Right cardiac atrium (tissue), 5 donors: ENCODE measurements at regions of chr4 and their contacts with region 1.

Region 1: DNA sequence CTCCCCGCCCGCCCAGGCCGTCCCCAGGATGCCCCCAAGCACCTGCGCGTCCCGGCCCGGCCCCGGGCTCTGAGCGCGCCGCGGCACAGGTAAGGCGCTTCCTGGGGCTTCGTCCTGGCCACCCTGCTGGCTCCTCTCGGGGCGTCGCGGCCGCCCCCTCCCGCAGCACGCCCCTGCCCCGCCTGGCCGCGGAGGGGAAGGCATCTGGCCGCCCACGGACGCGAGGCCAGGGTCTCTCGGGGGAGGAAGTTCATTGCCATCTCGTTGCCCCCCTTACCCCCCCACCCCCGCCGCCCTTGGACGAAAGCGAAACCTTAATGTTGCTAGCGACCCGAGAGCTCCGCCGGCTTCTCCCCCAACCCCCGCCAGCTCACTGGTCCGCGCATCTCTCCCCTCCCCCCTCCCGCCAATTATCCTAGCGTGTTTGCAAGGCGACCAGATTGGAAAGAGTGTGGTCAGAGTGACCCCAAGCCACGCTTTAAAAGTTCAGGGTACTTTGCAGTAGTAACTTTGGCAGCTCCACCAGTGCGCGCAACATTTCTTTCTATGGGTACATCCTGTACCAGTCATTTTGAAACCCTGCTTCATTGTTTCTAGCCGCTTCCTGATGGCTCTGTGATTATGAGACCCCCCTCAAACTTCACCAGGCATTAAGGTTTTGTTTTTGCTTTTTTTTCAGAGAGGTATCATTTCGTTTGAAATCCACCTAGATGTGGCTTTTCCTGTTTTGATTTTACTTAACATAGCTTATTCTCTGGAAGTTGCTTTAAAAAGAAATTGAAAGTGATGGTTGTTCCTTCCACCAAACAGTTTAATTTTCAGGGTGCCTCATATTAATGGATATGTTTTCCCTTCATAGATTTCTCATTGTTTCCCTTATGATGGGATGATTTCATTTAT is 626 bp downstream of the TBC1D1 start:
- DNase-seq: peak; percentile 37 to 70 (median 61)
- ATAC-seq: peak; percentile 34 to 56
- H3K4me3 ChIP-seq: peak overlapping the region; percentile 92
- H3K27ac ChIP-seq: peak overlapping the region; percentile 67
- H3K4me1 ChIP-seq: peaks cover 8% of the 10 kb centered on the region
- H3K27me3 ChIP-seq: no peaks in the 10 kb centered on the region

Region 2: GRCh38 chr4:37788819-37789218 is 102.7 kb before region 1 on chr4:
- intact Hi-C with region 1: no loop called
- DNase-seq: no peak
- ATAC-seq: no peak
- H3K4me3 ChIP-seq: no peak overlapping the region
- H3K27ac ChIP-seq: no peak overlapping the region
- H3K4me1 ChIP-seq: no peaks in the 10 kb centered on the region
- H3K27me3 ChIP-seq: no peaks in the 10 kb centered on the region

Region 3: DNA sequence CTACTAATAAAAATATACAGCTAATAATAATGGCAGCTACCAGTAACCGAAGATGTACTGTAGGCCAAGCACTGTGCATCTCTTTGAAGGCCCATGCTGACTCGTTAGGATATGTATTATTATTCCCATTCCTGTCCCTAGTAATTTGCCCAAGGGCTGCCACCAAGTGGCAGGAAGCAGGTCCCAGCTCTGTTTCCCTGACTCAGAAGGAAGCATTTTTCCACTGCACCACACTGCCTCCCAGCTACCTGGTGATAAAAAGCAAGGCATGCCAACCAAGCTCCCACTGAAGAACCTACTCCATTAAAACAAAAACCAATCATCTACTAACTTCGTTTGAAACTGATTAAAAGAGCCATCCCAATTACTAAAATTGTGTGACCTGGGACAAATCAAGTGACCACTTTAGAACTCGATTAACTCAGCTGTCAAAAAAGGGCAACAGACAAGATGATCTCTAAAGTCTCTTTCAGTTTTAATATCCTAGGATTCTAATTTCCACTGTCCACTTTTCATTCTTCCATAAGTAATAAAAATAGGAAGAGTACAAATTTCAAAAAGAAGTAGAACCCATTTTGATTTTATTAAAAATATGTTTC is 89.3 kb before region 1 on chr4:
- intact Hi-C with region 1: loop called in 1 of 4 experiments (anchors 10 kb)
- DNase-seq: peak in 2 of 3 donors; percentile 32 to 58
- ATAC-seq: peak; percentile 85 to 91
- H3K4me3 ChIP-seq: no peak overlapping the region
- H3K27ac ChIP-seq: no peak overlapping the region
- H3K4me1 ChIP-seq: no peaks in the 10 kb centered on the region
- H3K27me3 ChIP-seq: no peaks in the 10 kb centered on the region

Region 4: DNA sequence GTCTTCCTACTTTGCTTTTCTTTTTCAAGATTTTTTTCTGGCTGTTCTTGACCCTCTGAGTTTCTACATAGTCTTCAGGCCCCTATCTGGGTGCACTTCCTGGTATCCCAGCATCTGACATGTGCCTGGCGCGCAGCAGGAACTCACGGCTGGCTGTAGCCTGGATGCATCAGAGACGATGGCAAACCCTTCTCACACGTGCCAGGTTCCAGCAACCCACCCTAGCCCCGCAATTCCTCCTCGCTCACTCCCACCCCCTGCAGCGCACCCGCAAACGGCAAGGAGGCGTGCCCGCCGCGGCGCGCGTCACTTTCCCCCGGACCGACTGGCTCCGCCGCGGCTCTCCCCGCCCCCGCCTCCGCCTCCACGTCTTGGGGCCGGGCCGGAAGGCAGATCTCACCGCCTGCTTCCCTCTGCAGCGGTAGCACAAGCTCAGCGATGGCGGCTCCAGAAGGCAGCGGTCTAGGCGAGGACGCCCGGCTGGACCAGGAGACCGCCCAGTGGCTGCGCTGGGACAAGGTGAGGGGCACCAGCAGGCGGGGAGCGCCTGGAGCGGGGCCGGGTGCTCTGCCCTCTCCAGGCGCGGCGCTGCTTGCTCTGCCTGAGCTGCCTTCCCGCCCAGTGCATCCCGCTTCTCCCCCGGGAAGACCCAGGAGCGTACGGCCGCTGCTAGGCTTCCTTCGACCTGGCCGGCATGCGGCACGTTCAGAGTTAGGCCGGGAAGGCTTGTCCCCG is 65.0 kb before region 1 on chr4 and contains the start of gene PGM2:
- intact Hi-C with region 1: loop called in 1 of 4 experiments (anchors 10 kb)
- DNase-seq: peak; percentile 91 to 97 (median 95)
- ATAC-seq: peak; percentile 98 to 99
- H3K4me3 ChIP-seq: peak within 1 kb of the TSS; percentile 56
- H3K27ac ChIP-seq: peak within 1 kb of the TSS; percentile 46
- H3K4me1 ChIP-seq: peaks cover 2% of the 10 kb centered on the region
- H3K27me3 ChIP-seq: no peaks in the 10 kb centered on the region
- total RNA-seq, gene PGM2: 8.9 to 14.7 (median 10.7) TPM

Region 5: DNA sequence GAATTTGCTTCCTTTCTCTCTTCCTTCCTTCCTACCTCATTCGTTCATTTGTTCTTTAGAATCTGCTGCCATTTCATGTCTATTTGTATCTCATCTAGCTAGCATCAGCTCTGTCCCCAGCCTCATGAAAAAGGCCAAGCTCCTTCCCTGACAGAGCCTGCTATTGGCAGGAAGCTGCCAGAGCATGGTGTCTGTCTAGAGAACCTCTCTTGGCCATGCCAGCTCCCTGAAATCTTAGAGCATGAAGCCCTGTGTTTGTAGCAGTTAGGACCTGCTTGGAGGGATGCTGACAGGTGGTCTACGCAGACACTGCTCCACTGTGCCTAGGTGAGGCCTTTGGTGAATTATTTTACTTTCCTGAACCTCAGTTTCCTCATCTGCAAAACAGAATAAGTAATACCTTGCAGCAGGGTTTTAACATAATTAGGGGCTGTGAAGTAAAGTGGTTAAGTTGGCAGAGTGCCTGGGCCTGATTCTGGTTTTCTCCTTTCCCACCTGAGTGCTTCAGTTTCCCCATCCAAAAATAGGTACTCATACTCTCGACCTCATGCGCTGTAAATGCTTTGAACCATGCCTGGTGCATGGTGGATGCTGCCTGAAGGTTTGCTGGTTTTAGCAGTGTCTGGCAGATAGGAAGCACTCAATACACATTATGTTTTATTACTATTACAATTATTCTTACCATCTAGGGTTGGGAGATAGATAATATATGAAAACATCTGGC is 73.4 kb after region 1 on chr4:
- intact Hi-C with region 1: loop called in 1 of 4 experiments (anchors 10 kb)
- DNase-seq: no peak
- ATAC-seq: no peak
- H3K4me3 ChIP-seq: no peak overlapping the region
- H3K27ac ChIP-seq: no peak overlapping the region
- H3K4me1 ChIP-seq: peaks cover 6% of the 10 kb centered on the region
- H3K27me3 ChIP-seq: no peaks in the 10 kb centered on the region

Region 6: GRCh38 chr4:37977471-37978247 is 86.1 kb after region 1 on chr4:
- intact Hi-C with region 1: loop called in 1 of 4 experiments (anchors 5 kb)
- DNase-seq: peak; percentile 82 to 94 (median 91)
- ATAC-seq: peak; percentile 87 to 89
- H3K4me3 ChIP-seq: peak overlapping the region; percentile 95
- H3K27ac ChIP-seq: peak overlapping the region; percentile 95
- H3K4me1 ChIP-seq: peaks cover 14% of the 10 kb centered on the region
- H3K27me3 ChIP-seq: no peaks in the 10 kb centered on the region

Region 7: DNA sequence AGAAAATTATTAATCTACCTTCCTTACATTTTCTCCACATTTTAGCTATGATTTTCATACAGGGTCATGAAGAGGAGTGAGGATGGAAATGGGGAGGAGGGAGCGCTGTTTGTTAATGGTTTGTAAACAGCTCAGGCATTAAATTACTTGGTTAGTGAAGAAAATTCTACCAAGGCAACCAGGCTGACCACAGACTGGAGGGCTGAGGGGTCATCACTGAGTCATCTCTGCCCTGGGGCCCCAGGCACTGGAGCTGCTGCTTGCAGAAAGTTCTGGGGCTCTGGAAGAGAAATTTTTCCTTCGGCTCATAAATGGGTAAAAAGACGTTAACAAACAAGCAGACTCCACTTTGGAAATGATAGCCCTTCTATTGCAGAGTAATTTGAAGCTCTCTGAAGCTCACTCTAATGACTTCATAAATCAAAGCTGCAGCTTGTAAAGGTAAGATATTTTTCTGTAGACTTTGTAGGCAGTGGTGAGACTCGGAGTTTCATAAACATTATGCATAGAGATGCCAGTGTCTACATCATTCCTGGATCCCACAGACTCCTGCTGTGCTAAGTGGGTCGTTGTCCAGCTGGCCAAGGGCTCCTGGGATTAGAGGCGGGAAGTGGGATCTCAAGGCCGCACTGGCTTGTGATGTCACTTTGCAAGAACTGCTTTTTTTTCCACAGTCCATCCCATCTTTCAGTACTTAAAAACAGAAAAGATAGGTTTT is 228.3 kb after region 1 on chr4:
- intact Hi-C with region 1: no loop called
- DNase-seq: peak; percentile 39 to 69 (median 68)
- ATAC-seq: peak in 1 of 2 donors; percentile 36
- H3K4me3 ChIP-seq: no peak overlapping the region
- H3K27ac ChIP-seq: no peak overlapping the region
- H3K4me1 ChIP-seq: no peaks in the 10 kb centered on the region
- H3K27me3 ChIP-seq: no peaks in the 10 kb centered on the region